AG04449 (cell line): ENCODE measurements at regions of chr18 and their contacts with region 1.

Region 1: DNA sequence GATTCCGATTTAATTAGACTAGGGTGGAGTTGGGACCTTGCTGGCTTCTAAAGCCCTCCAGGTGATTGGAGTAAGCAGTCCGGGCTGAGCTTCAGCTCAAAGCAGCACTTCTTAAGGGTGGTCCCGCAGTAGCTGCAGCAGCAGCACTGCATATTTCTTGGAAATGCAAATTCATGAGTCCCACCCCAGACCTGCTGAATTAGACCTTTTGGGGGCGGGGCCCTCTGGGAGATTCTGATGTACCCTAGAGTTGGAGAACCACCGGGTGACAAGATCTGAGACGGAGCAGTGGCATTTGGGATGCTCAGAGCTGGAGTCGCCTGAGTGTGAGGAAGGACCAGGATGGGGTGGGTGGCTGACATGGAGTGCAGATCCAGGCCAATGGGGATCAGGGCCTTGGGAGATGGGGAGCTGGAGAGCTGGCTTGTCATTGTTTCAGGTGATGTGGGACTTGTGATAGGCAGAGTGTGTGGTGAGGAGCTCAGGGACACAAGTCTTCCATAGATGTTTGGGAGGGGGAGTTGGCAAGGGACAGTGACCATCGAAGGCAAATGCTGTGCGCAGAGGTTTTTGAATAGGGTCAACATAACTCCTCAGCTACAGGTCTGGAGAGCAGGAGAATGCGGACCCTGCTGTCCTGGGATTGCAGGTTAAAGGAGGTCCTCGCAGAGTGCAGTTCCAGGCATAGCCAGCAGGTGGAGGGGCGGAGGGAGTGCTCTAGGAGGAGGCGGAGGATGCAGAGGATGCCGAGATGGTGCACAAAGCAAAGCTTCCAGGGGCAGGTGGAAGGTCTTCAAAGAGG is 130.9 kb upstream of the RAB12 start:
- DNase-seq: no peak
- H3K4me3 ChIP-seq: no peak overlapping the region
- CTCF ChIP-seq: peak; percentile 98

Region 2: DNA sequence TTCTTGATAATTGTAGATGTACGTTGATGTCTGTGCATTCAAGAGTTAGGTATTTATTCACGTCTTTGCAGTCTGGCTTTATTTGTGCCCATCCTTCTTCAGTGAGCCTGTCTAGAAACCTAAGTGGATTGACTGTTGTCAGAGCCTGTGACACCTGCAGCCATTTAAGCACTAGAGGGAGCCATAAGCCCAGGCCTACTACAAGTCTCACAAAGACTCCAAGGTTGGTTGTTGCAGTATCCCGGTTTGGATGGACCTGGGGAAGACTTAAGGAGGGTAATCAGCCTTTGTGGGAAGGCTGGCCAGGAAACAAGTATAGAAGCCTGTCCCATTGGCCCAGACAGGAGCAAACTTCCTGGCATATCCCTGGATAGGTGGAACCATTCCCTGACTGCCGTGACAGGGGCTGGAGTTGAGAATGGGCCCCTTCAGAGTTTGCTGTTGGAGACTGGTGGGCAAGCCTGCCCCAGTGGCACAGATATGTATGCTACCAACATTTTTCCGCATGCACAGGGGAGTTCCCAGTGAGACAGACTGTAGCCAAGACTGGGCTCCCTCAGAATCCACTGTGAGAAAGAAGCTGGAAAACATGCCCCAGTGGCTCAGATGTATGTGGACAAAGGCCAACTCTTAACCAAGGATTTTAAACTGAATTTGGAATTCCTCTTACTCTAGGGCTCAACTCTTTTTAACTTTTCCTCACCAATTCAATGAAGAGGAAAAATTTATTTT is 1256.8 kb before region 1 on chr18:
- CTCF ChIA-PET with region 1: interaction called, 21 read pairs
- POLR2A ChIA-PET with region 1: no interaction called
- DNase-seq: peak; percentile 14
- H3K4me3 ChIP-seq: no peak overlapping the region
- CTCF ChIP-seq: peak; percentile 84

Region 3: DNA sequence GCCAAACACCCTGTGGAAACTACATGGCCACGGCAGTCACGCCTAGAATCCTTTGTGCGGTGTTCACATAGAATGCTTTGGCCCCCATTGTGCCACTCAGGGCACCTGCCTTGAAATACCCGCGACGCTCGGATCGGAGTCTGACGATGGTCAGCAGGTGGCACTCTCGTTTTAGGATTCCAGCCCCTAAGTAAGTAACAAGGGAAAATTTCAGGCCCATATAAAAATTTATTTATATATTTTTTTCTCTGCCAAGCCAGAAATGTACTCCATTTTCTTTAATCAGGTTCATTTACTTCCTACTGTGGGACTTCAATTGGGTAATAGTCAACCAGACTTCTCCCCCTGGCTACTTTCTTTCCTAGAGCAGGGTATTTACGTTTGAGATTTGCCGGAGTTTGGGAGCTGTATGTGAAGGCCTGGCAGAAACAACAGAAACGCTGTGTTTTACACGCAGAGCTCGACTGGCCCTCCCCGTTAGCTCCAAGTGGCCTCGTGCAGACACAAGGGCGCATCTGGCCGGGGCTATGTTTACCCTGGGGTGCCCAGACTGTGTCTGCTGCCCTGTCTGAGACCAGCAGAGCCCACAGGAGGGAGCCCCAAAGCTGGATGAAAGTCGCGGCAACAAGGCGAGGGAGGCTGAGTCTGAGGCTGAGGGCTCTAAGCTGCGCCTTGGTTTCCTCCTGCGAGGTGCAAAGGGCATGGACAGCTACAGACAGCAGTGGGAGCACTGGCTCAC is 1205.9 kb before region 1 on chr18:
- CTCF ChIA-PET with region 1: interaction called, 35 read pairs
- POLR2A ChIA-PET with region 1: no interaction called
- DNase-seq: no peak
- H3K4me3 ChIP-seq: no peak overlapping the region
- CTCF ChIP-seq: peak; percentile 46

Region 4: GRCh38 chr18:8493141-8493540 is 14.8 kb after region 1 on chr18:
- CTCF ChIA-PET with region 1: interaction called, 12 read pairs
- POLR2A ChIA-PET with region 1: no interaction called
- DNase-seq: no peak
- H3K4me3 ChIP-seq: no peak overlapping the region
- CTCF ChIP-seq: no peak